Ascending aorta (tissue), 2 donors: ENCODE measurements at regions of chr11 and their contacts with region 1.

Region 1: DNA sequence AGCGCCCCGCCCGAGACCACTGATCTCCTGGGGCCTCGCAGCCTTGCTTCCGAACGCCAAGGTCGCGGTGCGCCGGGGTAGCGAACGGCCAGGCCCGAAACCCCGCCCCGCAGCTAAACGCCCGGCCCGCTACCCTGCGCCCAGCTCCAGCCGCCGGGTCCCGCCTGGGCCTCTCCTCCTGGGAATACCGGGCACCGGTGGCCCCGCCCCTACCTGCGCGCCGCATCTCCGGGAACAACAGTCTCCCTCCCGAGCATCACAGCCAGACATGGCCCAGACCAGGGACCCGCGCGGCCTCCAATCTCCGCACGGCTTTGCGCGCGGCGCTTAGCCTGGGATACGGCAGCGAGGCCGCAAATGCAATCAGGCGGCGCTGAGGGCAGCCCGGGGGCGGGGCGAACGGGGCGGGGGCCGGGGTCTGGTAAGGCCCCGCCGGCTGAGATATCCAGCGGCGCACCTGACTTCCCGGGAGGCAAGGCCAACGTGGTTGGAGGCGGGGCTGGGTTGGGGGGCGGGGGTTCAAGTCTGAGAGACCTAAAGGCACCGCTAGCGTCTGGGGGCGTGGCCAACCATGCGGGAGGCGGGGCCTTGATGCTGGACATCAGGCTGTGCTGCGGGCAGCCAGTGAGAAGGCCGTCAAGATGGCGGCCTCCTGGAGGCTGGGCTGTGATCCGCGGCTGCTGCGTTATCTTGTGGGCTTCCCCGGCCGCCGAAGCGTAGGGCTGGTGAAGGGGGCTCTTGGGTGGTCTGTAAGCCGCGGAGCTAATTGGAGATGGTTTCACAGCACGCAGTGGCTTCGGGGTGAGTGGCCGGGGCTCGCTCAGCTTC is at the starts of genes APIP and PDHX:
- DNase-seq: peak; percentile 97 to 99
- H3K4me3 ChIP-seq: peak within 1 kb of the TSS; percentile 78 to 97
- H3K27ac ChIP-seq: peak within 1 kb of the TSS; percentile 92 to 97
- H3K4me1 ChIP-seq: peaks cover 4 to 14% of the 10 kb centered on the region in 2 donors
- H3K27me3 ChIP-seq: no peaks in the 10 kb centered on the region
- CTCF ChIP-seq: no peak
- total RNA-seq, gene APIP: 3.6 TPM
- total RNA-seq, gene PDHX: 23.3 TPM

Region 2: DNA sequence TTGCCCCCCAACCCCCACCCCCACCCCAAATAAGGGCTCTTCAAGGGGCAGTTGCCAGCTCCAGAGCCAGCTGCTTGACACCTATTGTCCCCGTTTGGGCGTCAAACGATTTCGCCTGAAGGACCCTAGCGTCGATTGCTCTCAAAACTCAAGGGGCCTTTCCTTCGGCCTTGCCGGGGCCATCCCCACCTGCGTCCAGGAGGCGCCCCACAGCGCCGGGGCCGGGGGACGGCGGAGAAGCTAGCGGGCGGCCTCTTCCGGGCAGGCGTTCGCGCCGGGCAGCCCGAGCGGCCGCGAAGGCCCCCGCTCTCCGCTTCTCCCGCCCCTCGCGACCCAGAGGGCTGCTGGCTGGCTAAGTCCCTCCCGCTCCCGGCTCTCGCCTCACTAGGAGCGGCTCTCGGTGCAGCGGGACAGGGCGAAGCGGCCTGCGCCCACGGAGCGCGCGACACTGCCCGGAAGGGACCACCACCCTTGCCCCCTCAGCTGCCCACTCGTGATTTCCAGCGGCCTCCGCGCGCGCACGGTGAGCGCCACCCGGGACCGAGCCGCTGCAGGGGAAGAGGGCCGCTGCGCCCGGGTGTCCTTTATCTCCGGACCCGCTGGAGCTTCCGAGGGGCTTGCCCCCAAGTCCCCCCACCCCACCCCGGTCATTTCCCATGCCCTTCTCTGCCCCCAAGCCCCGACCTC is 864.7 kb before region 1 on chr11 and contains the start of gene CAPRIN1:
- intact Hi-C with region 1: loop called (anchors 2 kb)
- DNase-seq: peak; percentile 23 to 91
- H3K4me3 ChIP-seq: peak within 1 kb of the TSS; percentile 92 to 99
- H3K27ac ChIP-seq: peak within 1 kb of the TSS; percentile 98 to 100
- H3K4me1 ChIP-seq: peaks cover 6 to 26% of the 10 kb centered on the region in 2 donors
- H3K27me3 ChIP-seq: no peaks in the 10 kb centered on the region
- CTCF ChIP-seq: peak in 1 of 3 experiments; percentile 8
- total RNA-seq, gene CAPRIN1: 155 TPM

Region 3: GRCh38 chr11:34438529-34439507 is 477.4 kb before region 1 on chr11 and contains the start of gene CAT:
- intact Hi-C with region 1: loop called (anchors 2 kb)
- DNase-seq: peak; percentile 92 to 98
- H3K4me3 ChIP-seq: peak within 1 kb of the TSS; percentile 87 to 88
- H3K27ac ChIP-seq: peak within 1 kb of the TSS; percentile 79 to 84
- H3K4me1 ChIP-seq: peaks cover 5 to 15% of the 10 kb centered on the region in 2 donors
- H3K27me3 ChIP-seq: no peaks in the 10 kb centered on the region
- CTCF ChIP-seq: no peak
- total RNA-seq, gene CAT: 69.2 TPM

Region 4: GRCh38 chr11:34773826-34774225 is 142.4 kb before region 1 on chr11:
- intact Hi-C with region 1: no loop called
- DNase-seq: no peak
- H3K4me3 ChIP-seq: no peak overlapping the region
- H3K27ac ChIP-seq: no peak overlapping the region
- H3K4me1 ChIP-seq: no peaks in the 10 kb centered on the region
- H3K27me3 ChIP-seq: no peaks in the 10 kb centered on the region
- CTCF ChIP-seq: no peak

Region 5: DNA sequence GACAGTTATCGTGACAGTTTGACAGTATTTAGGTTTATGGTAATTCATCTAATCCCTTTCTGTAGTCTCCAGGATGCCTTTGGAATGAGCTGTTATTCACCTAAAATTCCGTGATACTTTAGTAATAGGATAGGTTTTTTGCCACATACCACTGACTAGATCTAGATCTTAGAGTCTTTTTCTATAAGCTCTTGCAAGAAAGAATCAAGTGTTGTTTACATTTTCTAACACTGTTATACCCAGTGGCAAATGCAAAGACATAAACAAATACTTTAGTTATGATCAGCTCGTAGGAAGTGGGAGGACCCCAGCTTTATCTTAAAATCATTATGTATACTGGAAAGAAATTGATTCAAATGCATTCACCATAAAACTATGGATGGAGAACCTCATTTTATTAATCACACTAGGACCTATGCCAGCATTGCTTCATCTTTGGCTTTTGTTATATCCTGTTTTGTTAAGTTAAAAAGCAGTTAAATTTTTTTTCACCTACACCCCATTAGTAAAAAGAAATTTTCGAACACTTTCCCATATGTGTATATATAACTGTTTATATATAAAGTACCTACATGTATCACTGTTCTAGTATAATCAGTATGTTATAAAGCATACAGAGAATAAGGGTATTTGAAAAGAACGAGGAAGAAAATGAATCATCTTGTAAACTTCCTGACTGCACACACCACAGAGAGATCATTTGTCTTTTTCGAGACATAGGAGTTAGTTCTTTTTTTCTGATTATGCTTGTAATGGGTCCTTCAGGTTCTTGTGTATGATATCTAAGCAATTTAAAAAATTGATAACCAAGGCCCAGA is 61.1 kb after region 1 on chr11:
- intact Hi-C with region 1: no loop called
- DNase-seq: no peak
- H3K4me3 ChIP-seq: no peak overlapping the region
- H3K27ac ChIP-seq: no peak overlapping the region
- H3K4me1 ChIP-seq: no peaks in the 10 kb centered on the region
- H3K27me3 ChIP-seq: no peaks in the 10 kb centered on the region
- CTCF ChIP-seq: no peak

Region 6: GRCh38 chr11:35144136-35144741 is 228.0 kb after region 1 on chr11:
- intact Hi-C with region 1: loop called (anchors 5 kb)
- DNase-seq: no peak
- H3K4me3 ChIP-seq: peak overlapping the region; percentile 3 to 31
- H3K27ac ChIP-seq: peak overlapping the region; percentile 54 to 98
- H3K4me1 ChIP-seq: peaks cover 19 to 50% of the 10 kb centered on the region in 2 donors
- H3K27me3 ChIP-seq: no peaks in the 10 kb centered on the region
- CTCF ChIP-seq: no peak

Region 7: DNA sequence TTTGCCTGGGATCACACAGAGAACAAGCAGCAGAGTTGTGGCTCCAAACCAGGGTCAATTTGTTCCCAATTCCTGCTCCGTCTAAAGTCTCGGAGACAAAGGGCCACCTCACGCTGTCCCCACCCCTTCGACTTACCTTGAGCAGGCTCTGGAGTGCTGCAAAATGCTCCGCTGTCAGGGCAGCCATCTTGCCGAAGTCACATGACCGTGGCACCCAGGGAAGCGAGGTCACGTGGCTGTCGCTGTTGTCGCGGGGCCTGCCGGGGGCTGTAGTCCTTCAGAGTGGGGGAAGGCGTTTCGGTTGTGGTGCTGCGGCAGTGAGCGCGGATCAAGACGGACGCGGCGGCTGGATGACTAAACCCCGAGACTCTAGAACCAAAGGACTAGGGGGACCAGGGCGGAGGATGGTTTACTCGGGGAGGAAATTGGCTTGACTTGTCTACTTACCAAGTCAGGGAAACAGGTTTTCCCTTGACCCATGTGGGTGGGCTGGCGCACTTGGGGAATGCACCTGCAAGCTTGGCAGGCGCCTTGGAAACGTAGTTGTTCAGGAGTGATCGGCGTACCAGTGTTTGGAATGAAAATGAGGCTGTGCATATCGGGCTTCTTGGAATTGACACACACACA is 1373.1 kb after region 1 on chr11 and contains the start of gene COMMD9:
- intact Hi-C with region 1: loop called (anchors 10 kb)
- DNase-seq: peak; percentile 86 to 97
- H3K4me3 ChIP-seq: peak within 1 kb of the TSS; percentile 51 to 69
- H3K27ac ChIP-seq: no peak within 1 kb of the TSS
- H3K4me1 ChIP-seq: peaks cover 5 to 8% of the 10 kb centered on the region in 2 donors
- H3K27me3 ChIP-seq: no peaks in the 10 kb centered on the region
- CTCF ChIP-seq: no peak
- total RNA-seq, gene COMMD9: 69.2 TPM